HepG2 (cell line): ENCODE measurements at regions of chr17 and their contacts with region 1.

Region 1: GRCh38 chr17:58631523-58632323 is 60.1 kb downstream of the TEX14 start:
- DNase-seq: peak; percentile 99
- ATAC-seq: peak; percentile 98
- H3K4me3 ChIP-seq: peak overlapping the region; percentile 52 to 71 (median 71)
- H3K27ac ChIP-seq: peak overlapping the region; percentile 96
- H3K4me1 ChIP-seq: peaks cover 25% of the 10 kb centered on the region
- H3K27me3 ChIP-seq: no peaks in the 10 kb centered on the region
- CTCF ChIP-seq: peak; percentile 56
- EP300 ChIP-seq: peak; percentile 39 to 83; a peak in 3 of 4 replicates
- POLR2A ChIP-seq: peak; percentile 100
- RAD21 ChIP-seq: peak; percentile 82

Region 2: GRCh38 chr17:58487589-58488427 is 143.9 kb before region 1 on chr17 and contains the start of gene HSF5:
- CTCF ChIA-PET with region 1: no interaction called
- POLR2A ChIA-PET with region 1: no interaction called
- in situ Hi-C with region 1: no loop called
- intact Hi-C with region 1: no loop called
- DNase-seq: no peak
- ATAC-seq: peak; percentile 28
- H3K4me3 ChIP-seq: no peak within 1 kb of the TSS
- H3K27ac ChIP-seq: no peak within 1 kb of the TSS
- H3K4me1 ChIP-seq: peaks cover 13% of the 10 kb centered on the region
- H3K27me3 ChIP-seq: no peaks in the 10 kb centered on the region
- CTCF ChIP-seq: no peak
- EP300 ChIP-seq: no peak
- POLR2A ChIP-seq: no peak
- RAD21 ChIP-seq: no peak
- total RNA-seq, gene HSF5: not detected in 2 replicates

Region 3: GRCh38 chr17:58517734-58518609 is 113.8 kb before region 1 on chr17:
- CTCF ChIA-PET with region 1: no interaction called
- POLR2A ChIA-PET with region 1: interaction called, 77 read pairs
- in situ Hi-C with region 1: no loop called
- intact Hi-C with region 1: loop called (anchors 1 kb)
- DNase-seq: peak; percentile 100
- ATAC-seq: peak; percentile 88
- H3K4me3 ChIP-seq: peak overlapping the region; percentile 80 to 98 (median 92)
- H3K27ac ChIP-seq: peak overlapping the region; percentile 96
- H3K4me1 ChIP-seq: peaks cover 56% of the 10 kb centered on the region
- H3K27me3 ChIP-seq: no peaks in the 10 kb centered on the region; a peak in 2 of 5 replicates
- CTCF ChIP-seq: no peak
- EP300 ChIP-seq: peak; percentile 37 to 51; a peak in 3 of 4 replicates
- POLR2A ChIP-seq: peak; percentile 86
- RAD21 ChIP-seq: no peak

Region 4: DNA sequence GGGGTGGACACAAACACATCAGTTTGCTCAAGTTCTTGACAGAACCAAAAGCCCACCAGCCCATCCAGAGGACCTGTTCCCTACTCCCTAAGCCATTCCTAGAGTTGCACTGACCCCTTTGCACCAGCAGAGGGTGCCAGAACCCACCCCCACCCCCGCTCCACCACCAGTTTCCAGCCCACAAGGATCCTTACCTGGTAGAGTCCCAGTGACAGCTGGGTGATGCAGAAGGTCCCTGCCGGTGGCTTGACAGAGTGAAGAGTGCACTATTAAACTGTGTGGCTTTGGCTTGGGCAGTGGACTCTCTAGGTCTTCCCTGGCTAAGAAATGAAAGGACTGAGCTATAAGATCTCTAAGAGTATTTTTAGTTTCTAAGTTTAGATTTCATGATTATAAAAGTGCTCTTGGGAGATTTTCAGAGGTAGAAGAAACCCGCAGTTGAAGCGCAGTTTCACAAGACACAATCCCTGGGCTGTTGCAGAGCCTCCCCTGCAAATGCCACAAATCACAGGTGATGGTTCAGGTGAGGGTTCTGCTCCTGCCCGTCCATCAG is 43.9 kb before region 1 on chr17:
- CTCF ChIA-PET with region 1: interaction called, 6 read pairs
- POLR2A ChIA-PET with region 1: interaction called, 16 read pairs
- in situ Hi-C with region 1: no loop called
- intact Hi-C with region 1: no loop called
- DNase-seq: peak; percentile 63
- ATAC-seq: peak; percentile 95
- H3K4me3 ChIP-seq: no peak overlapping the region
- H3K27ac ChIP-seq: no peak overlapping the region
- H3K4me1 ChIP-seq: no peaks in the 10 kb centered on the region
- H3K27me3 ChIP-seq: peaks cover 0 to 4% of the 10 kb centered on the region in 2 experiments; a peak in 2 of 5 replicates
- CTCF ChIP-seq: peak; percentile 90
- EP300 ChIP-seq: no peak
- POLR2A ChIP-seq: no peak
- RAD21 ChIP-seq: peak; percentile 87

Region 5: DNA sequence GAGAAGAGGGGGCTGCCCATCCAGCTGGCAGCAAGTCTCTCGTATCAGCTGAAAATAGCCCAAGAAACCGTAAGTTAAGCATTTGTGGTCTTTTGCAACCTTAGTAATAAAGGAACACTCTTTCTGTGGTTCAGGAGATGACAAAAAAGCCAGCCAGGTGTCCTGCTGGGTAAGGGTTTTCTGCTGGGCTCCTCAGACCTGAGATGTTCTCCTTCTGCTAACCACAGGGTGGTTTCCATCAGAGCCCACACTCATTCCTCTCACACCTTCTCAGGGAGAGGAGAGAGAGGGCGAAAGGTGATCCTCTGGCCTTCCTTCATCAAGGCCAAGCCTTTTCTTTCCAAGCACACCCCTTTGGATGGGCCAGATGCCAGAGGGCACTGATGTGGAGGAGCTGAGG is 10.5 kb before region 1 on chr17:
- CTCF ChIA-PET with region 1: no interaction called
- POLR2A ChIA-PET with region 1: interaction called, 28 read pairs
- in situ Hi-C with region 1: no loop called
- intact Hi-C with region 1: no loop called
- DNase-seq: no peak
- ATAC-seq: no peak
- H3K4me3 ChIP-seq: no peak overlapping the region
- H3K27ac ChIP-seq: no peak overlapping the region
- H3K4me1 ChIP-seq: peaks cover 8% of the 10 kb centered on the region
- H3K27me3 ChIP-seq: peaks cover 3 to 14% of the 10 kb centered on the region in 2 experiments; a peak in 1 of 5 replicates
- CTCF ChIP-seq: no peak
- EP300 ChIP-seq: no peak
- POLR2A ChIP-seq: no peak
- RAD21 ChIP-seq: no peak

Region 6: GRCh38 chr17:58658804-58659713 is 27.3 kb after region 1 on chr17:
- CTCF ChIA-PET with region 1: no interaction called
- POLR2A ChIA-PET with region 1: interaction called, 154 read pairs
- in situ Hi-C with region 1: no loop called
- intact Hi-C with region 1: loop called (anchors 1 kb)
- DNase-seq: peak; percentile 95
- ATAC-seq: peak; percentile 88
- H3K4me3 ChIP-seq: peak overlapping the region; percentile 33 to 59 (median 35)
- H3K27ac ChIP-seq: peak overlapping the region; percentile 88
- H3K4me1 ChIP-seq: peaks cover 14% of the 10 kb centered on the region
- H3K27me3 ChIP-seq: no peaks in the 10 kb centered on the region
- CTCF ChIP-seq: peak; percentile 11; the same call in 1 of the 2 replicates
- EP300 ChIP-seq: peak; percentile 74 to 78; a peak in 2 of 4 replicates
- POLR2A ChIP-seq: peak; percentile 99 to 100
- RAD21 ChIP-seq: peak; percentile 90

Region 7: DNA sequence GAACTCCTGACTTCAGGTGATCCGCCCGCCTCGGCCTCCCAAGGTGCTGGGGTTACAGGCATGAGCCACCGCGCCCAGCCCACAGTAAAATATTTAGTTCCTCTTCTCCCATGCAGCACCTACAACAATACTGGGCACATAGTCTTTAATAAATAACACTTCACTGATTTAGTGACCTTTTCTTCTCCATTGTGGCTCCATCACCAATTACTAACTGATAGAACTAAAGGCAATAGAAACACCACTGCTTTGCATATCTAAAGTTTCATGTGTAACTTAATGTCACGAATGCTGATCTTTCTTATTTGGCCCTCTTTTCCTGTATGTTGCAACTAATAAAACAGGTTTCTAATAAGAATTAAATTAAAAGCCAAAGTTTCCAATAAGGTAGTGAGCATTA is 436.0 kb after region 1 on chr17:
- CTCF ChIA-PET with region 1: no interaction called
- POLR2A ChIA-PET with region 1: no interaction called
- in situ Hi-C with region 1: no loop called
- intact Hi-C with region 1: loop called (anchors 1 kb)
- DNase-seq: no peak
- ATAC-seq: no peak
- H3K4me3 ChIP-seq: no peak overlapping the region
- H3K27ac ChIP-seq: no peak overlapping the region
- H3K4me1 ChIP-seq: peaks cover 14% of the 10 kb centered on the region
- H3K27me3 ChIP-seq: no peaks in the 10 kb centered on the region
- CTCF ChIP-seq: no peak
- EP300 ChIP-seq: no peak
- POLR2A ChIP-seq: no peak
- RAD21 ChIP-seq: no peak